CD14-positive monocyte (primary cell): ENCODE measurements at regions of chr12 and their contacts with region 1.

Region 1: DNA sequence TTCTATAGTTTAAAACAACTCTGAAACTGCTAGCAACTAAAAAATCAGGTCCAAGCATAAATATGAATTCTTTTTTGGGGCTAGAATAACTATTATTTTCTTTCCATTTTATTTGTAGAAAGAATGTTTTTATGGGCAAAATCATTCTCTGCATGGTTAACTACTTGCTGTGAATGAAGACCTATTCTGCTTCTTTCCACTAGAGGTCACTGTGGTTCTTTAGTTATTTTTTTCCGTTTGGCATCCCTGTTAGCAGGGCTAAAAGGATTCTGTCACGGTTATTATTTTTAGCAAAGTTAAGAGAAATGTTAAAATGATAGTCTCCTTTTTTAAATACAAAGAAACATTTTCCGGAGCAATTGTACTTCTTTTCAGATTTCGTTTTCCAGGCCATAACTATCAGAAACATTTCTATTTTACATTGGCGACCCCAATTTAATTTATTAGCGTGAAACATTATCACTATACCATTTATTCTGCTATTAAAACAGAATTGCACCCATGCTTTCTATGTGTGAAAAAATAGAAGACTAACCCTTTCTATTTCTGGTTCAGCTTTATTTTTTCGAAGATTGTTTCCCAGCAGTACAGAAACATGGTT is 404.8 kb downstream of the ATP23 start:
- DNase-seq: peak in 1 of 3 donors; percentile 2
- H3K4me3 ChIP-seq: no peak overlapping the region
- H3K4me3 Mint-ChIP-seq: no peak overlapping the region
- H3K27ac ChIP-seq: no peak overlapping the region
- H3K27ac Mint-ChIP-seq: no peak overlapping the region
- H3K4me1 ChIP-seq: no peaks in the 10 kb centered on the region
- H3K4me1 Mint-ChIP-seq: peaks cover 4% of the 10 kb centered on the region
- H3K27me3 ChIP-seq: no peaks in the 10 kb centered on the region
- H3K27me3 Mint-ChIP-seq: no peaks in the 10 kb centered on the region
- CTCF ChIP-seq: peak; percentile 89

Region 2: GRCh38 chr12:58206876-58207275 is 139.3 kb before region 1 on chr12:
- intact Hi-C with region 1: no loop called
- DNase-seq: no peak
- H3K4me3 ChIP-seq: no peak overlapping the region
- H3K4me3 Mint-ChIP-seq: no peak overlapping the region
- H3K27ac ChIP-seq: no peak overlapping the region
- H3K27ac Mint-ChIP-seq: no peak overlapping the region
- H3K4me1 ChIP-seq: no peaks in the 10 kb centered on the region
- H3K4me1 Mint-ChIP-seq: no peaks in the 10 kb centered on the region
- H3K27me3 ChIP-seq: no peaks in the 10 kb centered on the region
- H3K27me3 Mint-ChIP-seq: peaks cover 0 to 2% (median 0%) of the 10 kb centered on the region in 3 donors
- CTCF ChIP-seq: no peak

Region 3: GRCh38 chr12:58408516-58408915 is 62.4 kb after region 1 on chr12:
- intact Hi-C with region 1: no loop called
- DNase-seq: no peak
- H3K4me3 ChIP-seq: no peak overlapping the region
- H3K4me3 Mint-ChIP-seq: no peak overlapping the region
- H3K27ac ChIP-seq: no peak overlapping the region
- H3K27ac Mint-ChIP-seq: no peak overlapping the region
- H3K4me1 ChIP-seq: no peaks in the 10 kb centered on the region
- H3K4me1 Mint-ChIP-seq: no peaks in the 10 kb centered on the region
- H3K27me3 ChIP-seq: no peaks in the 10 kb centered on the region
- H3K27me3 Mint-ChIP-seq: peaks cover 0 to 1% (median 0%) of the 10 kb centered on the region in 3 donors
- CTCF ChIP-seq: no peak

Region 4: GRCh38 chr12:59149997-59150642 is 804.0 kb after region 1 on chr12:
- intact Hi-C with region 1: loop called in 1 of 2 experiments (anchors 10 kb)
- DNase-seq: peak; percentile 5 to 37 (median 18)
- H3K4me3 ChIP-seq: no peak overlapping the region
- H3K4me3 Mint-ChIP-seq: no peak overlapping the region
- H3K27ac ChIP-seq: no peak overlapping the region
- H3K27ac Mint-ChIP-seq: no peak overlapping the region
- H3K4me1 ChIP-seq: no peaks in the 10 kb centered on the region
- H3K4me1 Mint-ChIP-seq: no peaks in the 10 kb centered on the region
- H3K27me3 ChIP-seq: no peaks in the 10 kb centered on the region
- H3K27me3 Mint-ChIP-seq: peaks cover 0 to 3% (median 2%) of the 10 kb centered on the region in 3 donors
- CTCF ChIP-seq: peak; percentile 85